PC-9 (cell line): ENCODE measurements at regions of chr2 and their contacts with region 1.

Region 1: GRCh38 chr2:28610583-28611201 is 114.8 kb downstream of the PLB1 start:
- DNase-seq: peak; percentile 91 to 99
- H3K4me3 ChIP-seq: no peak overlapping the region
- H3K27ac ChIP-seq: peak overlapping the region; percentile 83
- H3K4me1 ChIP-seq: peaks cover 59% of the 10 kb centered on the region
- H3K27me3 ChIP-seq: no peaks in the 10 kb centered on the region
- CTCF ChIP-seq: no peak

Region 2: GRCh38 chr2:28594289-28595108 is 16.2 kb before region 1 on chr2:
- CTCF ChIA-PET with region 1: no interaction called
- POLR2A ChIA-PET with region 1: interaction called, 4 read pairs
- intact Hi-C with region 1: loop called (anchors 1 kb)
- DNase-seq: peak; percentile 94 to 95
- H3K4me3 ChIP-seq: no peak overlapping the region; the same call in 1 of the 2 replicates
- H3K27ac ChIP-seq: peak overlapping the region; percentile 69
- H3K4me1 ChIP-seq: peaks cover 40% of the 10 kb centered on the region
- H3K27me3 ChIP-seq: no peaks in the 10 kb centered on the region
- CTCF ChIP-seq: peak; percentile 91

Region 3: GRCh38 chr2:28649481-28650214 is 39.0 kb after region 1 on chr2:
- CTCF ChIA-PET with region 1: no interaction called
- POLR2A ChIA-PET with region 1: no interaction called
- intact Hi-C with region 1: loop called (anchors 5 kb)
- DNase-seq: peak; percentile 74 to 93
- H3K4me3 ChIP-seq: peak overlapping the region; percentile 7; the same call in 1 of the 2 replicates
- H3K27ac ChIP-seq: peak overlapping the region; percentile 87
- H3K4me1 ChIP-seq: peaks cover 61% of the 10 kb centered on the region
- H3K27me3 ChIP-seq: no peaks in the 10 kb centered on the region
- CTCF ChIP-seq: no peak

Region 4: DNA sequence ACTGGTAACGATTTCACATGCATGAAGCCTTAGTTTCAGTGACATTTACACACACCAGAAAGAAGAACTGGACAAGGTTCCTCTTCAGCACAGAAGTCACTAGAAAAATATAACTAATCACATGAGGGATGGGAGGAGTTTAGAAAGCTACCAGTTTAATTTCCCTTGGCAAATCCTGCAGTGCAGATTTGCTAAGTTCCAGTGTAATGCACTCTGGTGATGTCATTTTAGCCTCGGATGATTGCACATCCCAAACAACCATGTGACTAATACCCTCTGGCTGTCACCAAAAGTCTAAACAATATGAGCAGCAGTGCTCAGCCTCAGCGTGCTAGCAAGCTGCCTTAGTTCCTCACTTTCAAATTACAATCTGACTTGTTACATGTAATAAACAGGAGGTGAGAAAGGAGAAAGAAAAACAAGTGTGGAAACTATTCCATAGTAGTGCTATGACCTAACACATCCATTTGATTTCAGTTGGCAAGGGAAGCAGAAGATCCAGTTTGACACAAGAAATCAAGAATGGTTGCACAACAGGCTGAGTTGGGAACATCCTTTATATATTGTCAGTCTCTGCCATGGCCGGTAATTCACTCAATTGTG is 105.7 kb after region 1 on chr2:
- CTCF ChIA-PET with region 1: no interaction called
- POLR2A ChIA-PET with region 1: no interaction called
- intact Hi-C with region 1: loop called (anchors 1 kb)
- DNase-seq: peak; percentile 60 to 96
- H3K4me3 ChIP-seq: peak overlapping the region; percentile 39; the same call in 1 of the 2 replicates
- H3K27ac ChIP-seq: peak overlapping the region; percentile 90
- H3K4me1 ChIP-seq: peaks cover 69% of the 10 kb centered on the region
- H3K27me3 ChIP-seq: no peaks in the 10 kb centered on the region
- CTCF ChIP-seq: no peak

Region 5: GRCh38 chr2:28894470-28895177 is 283.9 kb after region 1 on chr2 and contains the start of gene WDR43:
- CTCF ChIA-PET with region 1: no interaction called
- POLR2A ChIA-PET with region 1: interaction called, 14 read pairs
- intact Hi-C with region 1: no loop called
- DNase-seq: peak; percentile 98 to 99
- H3K4me3 ChIP-seq: peak within 1 kb of the TSS; percentile 98
- H3K27ac ChIP-seq: peak within 1 kb of the TSS; percentile 71
- H3K4me1 ChIP-seq: peaks cover 34% of the 10 kb centered on the region
- H3K27me3 ChIP-seq: no peaks in the 10 kb centered on the region
- CTCF ChIP-seq: no peak
- total RNA-seq, gene WDR43: 37.1 and 57.9 TPM in 2 replicates